ENCODE measurements at regions of chr4 and their contacts with region 1.

Region 1: GRCh38 chr4:174828845-174829701 is at the start of gene GLRA3:
- DNase-seq: peak; percentile 66
- H3K4me3 Mint-ChIP-seq: peak within 1 kb of the TSS; percentile 12
- H3K27ac Mint-ChIP-seq: no peak within 1 kb of the TSS
- H3K4me1 Mint-ChIP-seq: peaks cover 5% of the 10 kb centered on the region
- H3K27me3 Mint-ChIP-seq: peaks cover 7% of the 10 kb centered on the region
- total RNA-seq, gene GLRA3: not detected in 2 replicates

Region 2: GRCh38 chr4:173529477-173530325 is 1299.4 kb before region 1 on chr4 and contains the start of gene HAND2:
- intact Hi-C with region 1: loop called (anchors 5 kb)
- DNase-seq: no peak
- H3K4me3 Mint-ChIP-seq: peak within 1 kb of the TSS; percentile 28
- H3K27ac Mint-ChIP-seq: peak within 1 kb of the TSS; percentile 71
- H3K4me1 Mint-ChIP-seq: peaks cover 8% of the 10 kb centered on the region
- H3K27me3 Mint-ChIP-seq: peaks cover 85% of the 10 kb centered on the region
- total RNA-seq, gene HAND2: not detected in 2 replicates

Region 3: DNA sequence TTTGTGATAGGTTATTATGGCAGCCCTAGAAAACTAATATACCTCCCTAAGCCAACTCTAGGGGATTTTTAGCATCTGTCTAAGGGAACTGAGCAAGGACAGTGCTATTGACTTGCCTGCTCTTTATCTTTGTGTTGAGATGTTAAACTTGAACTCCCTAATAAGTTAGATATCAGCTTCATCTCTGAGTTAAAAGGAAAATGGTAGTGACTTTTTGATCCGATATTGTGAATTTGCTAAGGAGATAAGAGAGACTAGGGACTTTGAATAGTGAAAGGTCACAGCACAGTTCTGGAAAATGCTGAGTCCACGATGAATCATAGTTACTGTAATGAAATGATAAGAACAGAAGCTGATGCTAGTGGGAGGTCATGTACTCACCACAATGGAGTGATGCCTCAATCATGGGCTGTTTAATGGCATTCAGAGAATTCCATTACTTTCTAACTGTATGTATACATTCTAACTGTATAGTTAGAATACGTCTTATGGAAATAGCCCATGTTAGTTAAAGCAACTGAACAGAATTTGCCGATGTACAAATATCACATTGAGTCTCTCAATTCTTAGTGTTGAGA is 147.3 kb before region 1 on chr4:
- intact Hi-C with region 1: no loop called
- DNase-seq: no peak
- H3K4me3 Mint-ChIP-seq: no peak overlapping the region
- H3K27ac Mint-ChIP-seq: no peak overlapping the region
- H3K4me1 Mint-ChIP-seq: no peaks in the 10 kb centered on the region
- H3K27me3 Mint-ChIP-seq: peaks cover 3% of the 10 kb centered on the region

Region 4: GRCh38 chr4:174749091-174749490 is 80.0 kb before region 1 on chr4:
- intact Hi-C with region 1: no loop called
- DNase-seq: no peak
- H3K4me3 Mint-ChIP-seq: no peak overlapping the region
- H3K27ac Mint-ChIP-seq: no peak overlapping the region
- H3K4me1 Mint-ChIP-seq: no peaks in the 10 kb centered on the region
- H3K27me3 Mint-ChIP-seq: no peaks in the 10 kb centered on the region

Region 5: GRCh38 chr4:174910271-174910670 is 81.2 kb after region 1 on chr4:
- intact Hi-C with region 1: no loop called
- DNase-seq: no peak
- H3K4me3 Mint-ChIP-seq: no peak overlapping the region
- H3K27ac Mint-ChIP-seq: no peak overlapping the region
- H3K4me1 Mint-ChIP-seq: no peaks in the 10 kb centered on the region
- H3K27me3 Mint-ChIP-seq: no peaks in the 10 kb centered on the region